ENCODE measurements at regions of chr20 and their contacts with region 1.

Region 1: DNA sequence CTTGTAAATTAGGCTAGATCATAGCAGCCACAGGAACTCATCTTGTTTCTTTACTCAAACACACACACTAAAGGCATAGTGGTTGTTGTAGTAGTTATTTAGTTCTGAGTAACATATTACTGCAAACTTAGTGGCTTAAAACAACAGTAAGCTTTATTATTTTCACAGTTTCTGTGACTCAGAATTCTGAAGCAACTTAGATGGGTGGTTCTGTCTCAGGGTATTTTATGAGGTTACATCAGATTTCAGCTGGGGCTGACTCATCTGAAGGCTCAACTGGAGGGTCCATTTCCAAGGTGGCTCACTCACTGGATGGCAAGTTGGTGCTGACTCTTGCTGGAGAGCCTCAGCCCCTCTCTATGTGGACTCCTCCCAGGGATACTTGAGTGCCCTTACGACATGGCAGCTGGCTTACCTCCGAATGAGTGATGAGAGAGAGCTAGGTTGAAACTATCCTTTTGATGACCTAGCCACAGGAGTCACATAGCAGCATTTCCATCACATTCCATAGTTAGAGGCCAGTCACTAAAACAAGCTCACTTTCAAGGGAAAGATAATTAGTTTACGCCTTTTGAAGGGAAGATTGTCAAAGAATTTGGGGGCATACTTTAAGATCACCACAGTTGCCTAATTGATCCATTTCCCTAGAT is 136.5 kb upstream of the PRND start:
- DNase-seq: no peak
- CTCF ChIP-seq: no peak

Region 2: DNA sequence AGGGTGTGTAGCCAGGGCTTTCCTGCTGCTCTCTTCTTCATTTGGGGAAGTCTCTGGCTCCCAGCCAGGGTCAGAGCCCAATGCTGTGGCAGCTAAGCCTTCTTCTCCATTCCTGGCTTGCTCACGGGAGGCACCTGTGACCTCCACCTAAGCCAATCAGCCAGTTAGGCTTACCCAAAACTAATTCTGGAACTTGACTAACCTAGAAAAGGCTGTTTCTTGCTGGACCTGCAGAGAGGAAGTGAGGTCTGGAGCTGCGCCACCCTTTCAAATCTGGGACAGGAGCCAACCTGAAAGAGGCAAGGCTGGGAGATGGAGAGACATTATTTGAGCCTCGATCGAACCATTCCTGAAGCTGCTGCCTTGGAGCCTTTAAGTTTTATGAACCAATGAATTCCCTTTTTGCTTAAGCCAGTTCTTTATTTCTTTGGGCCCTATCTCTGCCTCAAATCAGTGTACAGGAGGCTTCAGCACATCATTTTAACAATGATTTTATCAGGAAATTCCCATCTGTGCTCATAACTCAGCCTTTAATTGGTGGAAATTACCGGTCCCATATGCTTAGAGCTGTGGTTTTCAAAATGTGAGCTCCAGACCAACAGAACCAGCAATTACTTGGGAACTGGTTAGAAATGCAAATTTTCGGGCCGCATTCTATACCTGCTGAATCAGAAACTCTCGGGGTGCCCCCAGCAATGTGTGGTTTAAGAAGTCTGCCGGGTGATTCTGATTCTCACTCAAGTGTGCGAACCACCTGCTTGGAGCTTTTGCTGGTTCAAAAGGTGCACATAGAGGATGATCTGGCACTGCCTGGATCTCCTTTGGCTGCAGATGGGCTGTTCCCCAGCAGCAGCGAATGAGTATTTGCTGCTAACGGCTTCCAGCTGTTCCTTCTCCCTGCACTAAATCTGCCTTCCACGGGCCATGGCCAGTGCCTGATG is 472.5 kb before region 1 on chr20:
- in situ Hi-C with region 1: loop called (anchors 10 kb)
- DNase-seq: no peak
- CTCF ChIP-seq: no peak